Ovary (tissue), 10 donors: ENCODE measurements at regions of chr15 and their contacts with region 1.

Region 1: DNA sequence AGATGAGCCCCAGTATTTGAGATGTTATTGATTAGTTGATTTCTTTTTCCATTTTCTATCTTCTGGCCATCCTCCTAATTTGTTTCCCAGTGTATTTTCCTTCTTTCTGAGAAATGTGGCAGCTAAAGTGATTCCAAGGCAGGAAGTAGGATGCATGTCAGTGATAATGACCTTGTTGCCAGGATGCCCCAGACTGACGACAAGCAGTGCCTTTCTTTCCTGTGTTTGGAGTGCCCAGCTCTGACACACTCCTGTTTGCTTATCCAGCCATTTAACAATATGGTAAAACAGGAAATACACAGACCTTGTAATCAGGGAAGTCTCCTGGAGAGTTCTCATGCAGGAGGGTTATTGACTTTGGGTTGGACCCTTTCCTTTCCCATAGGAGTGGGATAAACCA is 20.4 kb downstream of the TMOD2 start:
- DNase-seq: no peak
- H3K4me3 ChIP-seq: no peak overlapping the region
- H3K27ac ChIP-seq: no peak overlapping the region
- H3K4me1 ChIP-seq: no peaks in the 10 kb centered on the region
- H3K27me3 ChIP-seq: no peaks in the 10 kb centered on the region
- CTCF ChIP-seq: no peak
- EP300 ChIP-seq: no peak
- POLR2A ChIP-seq: no peak

Region 2: DNA sequence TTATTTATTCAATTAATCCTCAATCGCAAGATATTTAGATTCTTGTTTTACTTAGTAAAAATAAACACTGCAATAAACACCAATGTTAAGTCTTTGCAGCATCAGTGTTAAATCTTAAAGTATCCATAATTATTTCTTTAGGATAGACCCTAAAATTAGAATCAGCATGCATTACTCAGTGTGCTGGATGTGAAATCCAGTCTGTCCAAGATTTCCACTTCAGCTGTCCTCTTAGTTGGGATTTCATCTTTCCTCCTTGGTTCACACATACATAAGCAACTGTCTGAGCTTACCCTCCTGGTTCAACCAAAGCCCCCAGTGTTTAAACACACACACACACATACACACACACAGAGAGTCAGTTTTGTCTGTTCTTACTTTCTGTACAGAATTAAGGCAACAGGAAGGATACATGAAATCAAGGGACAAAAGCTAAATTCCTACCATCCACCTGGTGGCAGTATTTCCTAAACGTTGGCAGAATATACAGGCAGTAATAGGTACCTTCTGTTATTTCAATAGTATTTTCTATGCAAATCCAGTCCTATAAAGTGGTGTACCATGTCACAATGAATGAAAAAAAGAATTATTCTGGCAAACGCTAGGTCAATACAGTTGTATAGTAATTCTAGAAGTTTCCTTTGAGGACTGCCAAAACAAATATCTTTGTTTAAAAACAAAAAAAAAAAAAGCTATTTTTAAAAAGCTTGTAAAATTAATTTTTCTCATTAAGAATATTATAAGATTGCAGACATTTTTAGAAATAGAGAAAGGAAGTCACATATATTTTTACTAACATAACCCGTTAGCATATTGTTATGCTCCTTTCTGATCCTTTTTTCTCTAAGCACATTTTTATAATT is 121.9 kb before region 1 on chr15:
- intact Hi-C with region 1: loop called (anchors 2 to 5 kb)
- DNase-seq: peak in 2 of 5 donors; percentile 13 to 52
- H3K4me3 ChIP-seq: no peak overlapping the region
- H3K27ac ChIP-seq: no peak overlapping the region
- H3K4me1 ChIP-seq: no peaks in the 10 kb centered on the region
- H3K27me3 ChIP-seq: no peaks in the 10 kb centered on the region
- CTCF ChIP-seq: peak; percentile 52 to 86 (median 73)
- EP300 ChIP-seq: no peak
- POLR2A ChIP-seq: no peak